Caco-2 (cell line): ENCODE measurements at regions of chr5 and their contacts with region 1.

Region 1: DNA sequence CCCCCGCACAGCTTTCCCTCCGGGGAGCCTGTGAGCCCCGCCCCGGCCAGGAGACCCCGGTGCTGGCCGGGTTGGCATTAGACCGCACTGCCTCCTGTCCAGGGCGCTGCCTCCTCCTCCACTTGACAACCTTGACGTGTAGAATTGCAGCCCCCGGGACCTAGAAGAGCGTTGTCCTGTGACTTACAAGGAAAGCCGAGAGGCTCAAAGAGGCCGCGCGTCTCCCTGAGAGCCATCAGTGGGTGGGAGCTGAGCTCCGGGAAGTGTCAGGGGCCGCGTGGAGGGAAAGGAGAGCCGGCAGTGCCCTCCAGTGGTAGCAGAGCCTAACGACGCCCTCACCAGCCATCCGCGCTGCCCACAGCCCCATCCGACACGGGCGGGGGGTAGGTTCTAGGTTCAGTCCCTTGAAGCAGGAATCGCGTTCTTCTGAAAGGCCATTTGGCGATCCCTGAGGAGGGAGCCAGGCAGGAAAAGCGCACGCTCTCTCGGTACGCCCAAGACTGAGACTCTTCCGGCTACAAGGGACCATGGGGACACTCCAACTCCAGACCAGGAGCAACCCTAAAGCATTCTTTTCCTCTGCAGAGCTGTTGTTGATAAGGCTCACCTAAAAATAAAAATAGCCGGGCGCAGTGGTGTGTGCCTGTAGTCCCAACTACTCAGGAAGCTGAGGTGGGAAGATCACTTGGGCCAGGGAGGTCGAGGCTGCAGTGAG is 40.6 kb upstream of the SAP30L start:
- DNase-seq: peak; percentile 80 to 85
- H3K4me3 ChIP-seq: 0 out of 2 replicates have a peak overlapping the region, but pooled peaks have one; percentile 0
- H3K4me3 Mint-ChIP-seq: peak overlapping the region; percentile 54
- H3K27ac Mint-ChIP-seq: no peak overlapping the region
- H3K4me1 ChIP-seq: peaks cover 5% of the 10 kb centered on the region
- H3K4me1 Mint-ChIP-seq: peaks cover 9% of the 10 kb centered on the region
- H3K27me3 ChIP-seq: no peaks in the 10 kb centered on the region
- H3K27me3 Mint-ChIP-seq: no peaks in the 10 kb centered on the region
- CTCF ChIP-seq: peak; percentile 83 to 92

Region 2: GRCh38 chr5:153974131-153974812 is 431.0 kb before region 1 on chr5:
- CTCF ChIA-PET with region 1: interaction called, 14 read pairs
- POLR2A ChIA-PET with region 1: no interaction called
- intact Hi-C with region 1: loop called (anchors 1 kb)
- DNase-seq: peak in 1 of 2 experiments; percentile 52
- H3K4me3 ChIP-seq: no peak overlapping the region
- H3K4me3 Mint-ChIP-seq: no peak overlapping the region
- H3K27ac Mint-ChIP-seq: no peak overlapping the region
- H3K4me1 ChIP-seq: no peaks in the 10 kb centered on the region
- H3K4me1 Mint-ChIP-seq: no peaks in the 10 kb centered on the region
- H3K27me3 ChIP-seq: no peaks in the 10 kb centered on the region
- H3K27me3 Mint-ChIP-seq: peaks cover 11% of the 10 kb centered on the region
- CTCF ChIP-seq: peak; percentile 80 to 81

Region 3: GRCh38 chr5:154189819-154190594 is 215.2 kb before region 1 on chr5:
- CTCF ChIA-PET with region 1: interaction called, 27 read pairs
- POLR2A ChIA-PET with region 1: no interaction called
- intact Hi-C with region 1: no loop called
- DNase-seq: peak; percentile 76 to 80
- H3K4me3 ChIP-seq: peak overlapping the region; percentile 94
- H3K4me3 Mint-ChIP-seq: peak overlapping the region; percentile 72
- H3K27ac Mint-ChIP-seq: no peak overlapping the region
- H3K4me1 ChIP-seq: no peaks in the 10 kb centered on the region
- H3K4me1 Mint-ChIP-seq: peaks cover 25% of the 10 kb centered on the region
- H3K27me3 ChIP-seq: no peaks in the 10 kb centered on the region; the same call in 1 of the 2 replicates
- H3K27me3 Mint-ChIP-seq: peaks cover 10% of the 10 kb centered on the region
- CTCF ChIP-seq: peak; percentile 41 to 72

Region 4: DNA sequence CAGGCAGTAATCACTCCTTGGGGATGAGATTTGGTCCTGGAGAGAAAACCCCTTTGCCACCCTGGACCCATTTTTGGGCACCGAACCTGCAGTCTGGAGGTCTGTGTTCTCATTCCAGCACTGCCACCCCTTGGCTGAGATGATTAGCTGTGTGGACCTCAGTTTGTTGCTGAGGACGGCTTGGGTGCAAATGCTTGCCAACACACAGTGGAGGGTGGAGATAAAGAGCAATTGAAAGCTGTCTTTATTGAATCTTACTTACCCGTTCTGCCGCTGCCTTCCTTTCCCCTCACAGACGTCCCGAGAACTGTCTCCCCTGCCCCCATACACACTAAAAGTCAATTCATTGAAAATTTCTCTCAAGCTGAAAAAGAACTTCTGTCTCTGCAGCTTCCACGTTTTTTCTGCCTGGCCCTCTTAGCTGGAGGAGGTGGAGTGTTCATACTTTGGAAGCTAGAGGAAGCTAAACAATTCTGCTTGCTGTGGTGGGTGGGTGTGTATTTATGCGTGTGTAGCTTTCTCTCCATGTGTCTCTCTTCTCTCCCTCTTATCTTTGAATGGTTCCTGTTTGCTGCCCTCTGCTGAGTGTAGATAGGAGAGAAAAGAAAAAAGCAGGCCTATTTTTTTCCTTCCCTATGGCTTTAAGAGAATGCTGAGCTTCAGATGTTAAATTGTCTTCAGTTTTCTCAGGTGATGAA is 208.1 kb before region 1 on chr5:
- CTCF ChIA-PET with region 1: no interaction called
- POLR2A ChIA-PET with region 1: no interaction called
- intact Hi-C with region 1: loop called (anchors 1 kb)
- DNase-seq: peak in 1 of 2 experiments; percentile 23
- H3K4me3 ChIP-seq: no peak overlapping the region
- H3K4me3 Mint-ChIP-seq: no peak overlapping the region
- H3K27ac Mint-ChIP-seq: no peak overlapping the region
- H3K4me1 ChIP-seq: peaks cover 5% of the 10 kb centered on the region; the same call in 1 of the 2 replicates
- H3K4me1 Mint-ChIP-seq: peaks cover 29% of the 10 kb centered on the region
- H3K27me3 ChIP-seq: no peaks in the 10 kb centered on the region
- H3K27me3 Mint-ChIP-seq: no peaks in the 10 kb centered on the region
- CTCF ChIP-seq: peak in 1 of 2 experiments; percentile 47

Region 5: GRCh38 chr5:154242964-154243376 is 162.3 kb before region 1 on chr5:
- CTCF ChIA-PET with region 1: no interaction called
- POLR2A ChIA-PET with region 1: no interaction called
- intact Hi-C with region 1: loop called (anchors 5 kb)
- DNase-seq: no peak
- H3K4me3 ChIP-seq: no peak overlapping the region
- H3K4me3 Mint-ChIP-seq: no peak overlapping the region
- H3K27ac Mint-ChIP-seq: peak overlapping the region; percentile 34
- H3K4me1 ChIP-seq: 0 out of 2 replicates have a peak, but pooled peaks cover 5% of the 10 kb centered on the region
- H3K4me1 Mint-ChIP-seq: peaks cover 15% of the 10 kb centered on the region
- H3K27me3 ChIP-seq: no peaks in the 10 kb centered on the region
- H3K27me3 Mint-ChIP-seq: no peaks in the 10 kb centered on the region
- CTCF ChIP-seq: no peak

Region 6: DNA sequence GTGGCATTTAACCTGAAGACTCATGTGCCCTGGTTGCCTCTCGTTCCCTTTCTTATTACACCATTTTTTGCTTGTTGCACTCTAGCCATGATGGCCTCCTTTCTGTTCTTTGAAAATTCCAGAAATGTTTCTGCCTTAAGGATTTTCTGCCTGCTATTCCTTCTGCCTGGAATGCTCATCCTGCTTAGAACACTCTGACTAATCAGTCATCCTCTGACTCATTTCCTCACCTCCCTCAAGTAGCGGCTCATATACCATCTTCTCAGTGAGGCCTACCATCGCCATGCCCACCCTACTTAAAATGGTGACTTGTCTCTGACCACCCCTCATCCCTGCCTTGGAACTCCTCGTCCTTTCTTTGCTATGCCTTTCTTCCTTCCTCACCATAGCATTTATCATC is 677.2 kb after region 1 on chr5:
- CTCF ChIA-PET with region 1: no interaction called
- POLR2A ChIA-PET with region 1: no interaction called
- intact Hi-C with region 1: no loop called
- DNase-seq: no peak
- H3K4me3 ChIP-seq: no peak overlapping the region
- H3K4me3 Mint-ChIP-seq: no peak overlapping the region
- H3K27ac Mint-ChIP-seq: no peak overlapping the region
- H3K4me1 ChIP-seq: no peaks in the 10 kb centered on the region
- H3K4me1 Mint-ChIP-seq: no peaks in the 10 kb centered on the region
- H3K27me3 ChIP-seq: no peaks in the 10 kb centered on the region; the same call in 1 of the 2 replicates
- H3K27me3 Mint-ChIP-seq: peaks cover 17% of the 10 kb centered on the region
- CTCF ChIP-seq: no peak

Region 7: GRCh38 chr5:155368490-155368889 is 963.3 kb after region 1 on chr5:
- CTCF ChIA-PET with region 1: no interaction called
- POLR2A ChIA-PET with region 1: no interaction called
- intact Hi-C with region 1: no loop called
- DNase-seq: no peak
- H3K4me3 ChIP-seq: no peak overlapping the region
- H3K4me3 Mint-ChIP-seq: no peak overlapping the region
- H3K27ac Mint-ChIP-seq: no peak overlapping the region
- H3K4me1 ChIP-seq: no peaks in the 10 kb centered on the region
- H3K4me1 Mint-ChIP-seq: no peaks in the 10 kb centered on the region
- H3K27me3 ChIP-seq: no peaks in the 10 kb centered on the region
- H3K27me3 Mint-ChIP-seq: peaks cover 6% of the 10 kb centered on the region
- CTCF ChIP-seq: no peak